ENCODE measurements at regions of chr3 and their contacts with region 1.

Region 1: DNA sequence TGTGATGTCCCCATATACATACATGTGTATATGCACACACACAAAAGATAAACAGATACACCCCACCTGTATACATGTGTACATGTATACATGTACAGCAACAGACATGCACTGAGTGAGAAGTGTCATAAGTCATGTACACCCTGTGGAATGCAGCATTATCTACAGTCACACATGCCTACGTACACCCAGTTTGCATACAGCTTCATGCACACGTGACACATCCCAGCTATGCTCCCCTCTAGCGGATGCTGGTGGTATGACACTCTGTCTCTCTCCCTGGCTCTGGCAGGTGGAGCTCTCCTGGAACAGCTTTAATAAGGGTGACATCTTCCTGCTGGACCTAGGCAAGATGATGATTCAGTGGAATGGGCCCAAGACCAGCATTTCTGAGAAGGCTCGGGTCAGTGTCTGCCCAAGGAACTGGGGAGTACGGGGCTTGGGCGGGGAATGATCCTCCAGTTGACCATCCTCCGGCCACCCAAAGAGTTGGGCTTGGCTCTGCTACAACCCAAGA is 6.3 kb downstream of the VILL start:
- DNase-seq: peak; percentile 53 to 92 (median 74)
- ATAC-seq: peak; percentile 30 to 54 (median 48)
- H3K4me3 ChIP-seq: no peak overlapping the region
- H3K4me3 Mint-ChIP-seq: peak overlapping the region; percentile 25 to 93 (median 50)
- H3K27ac ChIP-seq: peak overlapping the region; percentile 85
- H3K27ac Mint-ChIP-seq: peak overlapping the region; percentile 94 to 98
- H3K4me1 ChIP-seq: peaks cover 29 to 55% of the 10 kb centered on the region in 2 experiments
- H3K4me1 Mint-ChIP-seq: peaks cover 57 to 69% (median 58%) of the 10 kb centered on the region in 3 donors
- H3K27me3 ChIP-seq: no peaks in the 10 kb centered on the region
- H3K27me3 Mint-ChIP-seq: no peaks in the 10 kb centered on the region

Region 2: DNA sequence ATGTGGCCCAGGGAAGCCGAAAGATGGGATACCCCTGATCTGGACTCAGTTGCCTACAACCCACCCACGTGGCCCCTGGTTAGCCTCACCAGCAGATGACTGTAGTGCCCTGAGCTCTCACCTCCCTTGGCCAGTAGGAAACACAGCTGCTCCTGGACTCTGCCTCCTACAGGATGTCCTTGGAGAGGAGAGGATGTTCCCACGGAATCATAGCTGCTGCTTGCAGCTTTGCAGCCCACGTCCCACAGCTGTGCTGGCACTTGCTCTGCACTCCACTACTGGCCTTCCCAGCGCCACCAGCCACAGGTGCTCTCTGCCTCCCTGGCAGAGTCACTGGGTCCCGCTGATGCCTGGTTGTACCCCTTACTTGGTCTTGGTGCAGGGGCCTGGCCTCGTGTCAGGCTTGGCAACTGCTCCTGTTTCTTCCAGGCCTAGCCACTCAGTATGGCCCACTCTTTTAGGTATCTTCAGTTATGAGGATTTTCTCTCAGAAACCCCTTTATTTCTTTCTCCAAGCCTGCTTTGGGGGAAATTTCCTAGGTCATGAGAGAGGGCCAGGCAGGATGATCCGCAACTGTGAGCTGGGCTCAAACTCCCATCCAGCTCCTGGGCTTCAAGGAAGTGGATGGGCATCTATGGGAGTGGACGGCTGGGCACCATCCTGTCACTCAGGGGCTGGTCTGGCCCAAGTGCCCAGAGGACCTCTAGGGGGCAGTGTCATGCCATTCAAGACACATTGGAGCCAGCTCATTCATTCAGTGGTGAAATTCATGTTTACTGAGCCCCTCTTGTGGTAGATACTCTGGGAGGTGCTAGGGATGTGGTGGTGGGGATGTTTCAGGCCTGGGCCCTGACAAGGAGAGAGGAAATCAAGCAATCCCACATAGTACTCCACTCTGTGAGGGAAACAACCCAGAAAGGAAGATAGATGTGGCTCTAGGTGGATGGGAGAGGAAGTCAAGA is 22.4 kb before region 1 on chr3:
- CTCF ChIA-PET with region 1: interaction called, 3 to 39 read pairs
- POLR2A ChIA-PET with region 1: no interaction called
- DNase-seq: peak; percentile 30 to 84 (median 59)
- ATAC-seq: peak; percentile 89 to 99 (median 93)
- H3K4me3 ChIP-seq: no peak overlapping the region
- H3K4me3 Mint-ChIP-seq: no peak overlapping the region
- H3K27ac ChIP-seq: no peak overlapping the region
- H3K27ac Mint-ChIP-seq: no peak overlapping the region
- H3K4me1 ChIP-seq: peaks cover 0 to 8% of the 10 kb centered on the region in 2 experiments
- H3K4me1 Mint-ChIP-seq: peaks cover 3 to 8% (median 3%) of the 10 kb centered on the region in 3 donors
- H3K27me3 ChIP-seq: no peaks in the 10 kb centered on the region
- H3K27me3 Mint-ChIP-seq: no peaks in the 10 kb centered on the region

Region 3: GRCh38 chr3:38028621-38029361 is 31.9 kb after region 1 on chr3:
- CTCF ChIA-PET with region 1: no interaction called
- POLR2A ChIA-PET with region 1: no interaction called
- DNase-seq: no peak
- ATAC-seq: no peak
- H3K4me3 ChIP-seq: peak overlapping the region; percentile 35 to 47
- H3K4me3 Mint-ChIP-seq: peak overlapping the region; percentile 54 to 82 (median 61)
- H3K27ac ChIP-seq: no peak overlapping the region
- H3K27ac Mint-ChIP-seq: peak overlapping the region in 1 of 2 donors; percentile 86
- H3K4me1 ChIP-seq: peaks cover 2 to 50% of the 10 kb centered on the region in 2 experiments
- H3K4me1 Mint-ChIP-seq: peaks cover 39 to 50% (median 40%) of the 10 kb centered on the region in 3 donors
- H3K27me3 ChIP-seq: peaks cover 0 to 24% of the 10 kb centered on the region in 2 experiments
- H3K27me3 Mint-ChIP-seq: peaks cover 6 to 11% of the 10 kb centered on the region in 2 donors

Region 4: GRCh38 chr3:38039101-38039898 is 42.5 kb after region 1 on chr3 and contains the start of gene DLEC1:
- CTCF ChIA-PET with region 1: interaction called in 1 of 2 experiments, 20 read pairs
- POLR2A ChIA-PET with region 1: interaction called in 1 of 2 experiments, 5 read pairs
- DNase-seq: peak; percentile 56 to 92 (median 81)
- ATAC-seq: peak; percentile 72 to 78 (median 76)
- H3K4me3 ChIP-seq: peak within 1 kb of the TSS; percentile 66 to 68
- H3K4me3 Mint-ChIP-seq: peak within 1 kb of the TSS; percentile 82 to 91 (median 84)
- H3K27ac ChIP-seq: peak within 1 kb of the TSS; percentile 97
- H3K27ac Mint-ChIP-seq: peak within 1 kb of the TSS; percentile 91 to 97
- H3K4me1 ChIP-seq: peaks cover 8 to 38% of the 10 kb centered on the region in 2 experiments
- H3K4me1 Mint-ChIP-seq: peaks cover 30 to 42% (median 34%) of the 10 kb centered on the region in 3 donors
- H3K27me3 ChIP-seq: no peaks in the 10 kb centered on the region
- H3K27me3 Mint-ChIP-seq: no peaks in the 10 kb centered on the region
- total RNA-seq, gene DLEC1: 4.7 to 21.7 (median 17.8) TPM

Region 5: GRCh38 chr3:38496131-38496910 is 499.5 kb after region 1 on chr3 and contains the start of gene EXOG:
- CTCF ChIA-PET with region 1: interaction called in 1 of 2 experiments, 3 read pairs
- POLR2A ChIA-PET with region 1: interaction called in 1 of 2 experiments, 13 read pairs
- DNase-seq: peak; percentile 86 to 96 (median 92)
- ATAC-seq: peak; percentile 91 to 97 (median 92)
- H3K4me3 ChIP-seq: peak within 1 kb of the TSS; percentile 78 to 96
- H3K4me3 Mint-ChIP-seq: peak within 1 kb of the TSS; percentile 96 to 97 (median 97)
- H3K27ac ChIP-seq: peak within 1 kb of the TSS; percentile 52
- H3K27ac Mint-ChIP-seq: peak within 1 kb of the TSS; percentile 71 to 90
- H3K4me1 ChIP-seq: peaks cover 2 to 14% of the 10 kb centered on the region in 2 experiments
- H3K4me1 Mint-ChIP-seq: peaks cover 23 to 31% (median 24%) of the 10 kb centered on the region in 3 donors
- H3K27me3 ChIP-seq: no peaks in the 10 kb centered on the region
- H3K27me3 Mint-ChIP-seq: no peaks in the 10 kb centered on the region
- total RNA-seq, gene EXOG: 21.5 to 24.8 (median 22.9) TPM

Measured in T-cell (primary cell).